ENCODE measurements at regions of chr19 and their contacts with region 1.

Region 1: DNA sequence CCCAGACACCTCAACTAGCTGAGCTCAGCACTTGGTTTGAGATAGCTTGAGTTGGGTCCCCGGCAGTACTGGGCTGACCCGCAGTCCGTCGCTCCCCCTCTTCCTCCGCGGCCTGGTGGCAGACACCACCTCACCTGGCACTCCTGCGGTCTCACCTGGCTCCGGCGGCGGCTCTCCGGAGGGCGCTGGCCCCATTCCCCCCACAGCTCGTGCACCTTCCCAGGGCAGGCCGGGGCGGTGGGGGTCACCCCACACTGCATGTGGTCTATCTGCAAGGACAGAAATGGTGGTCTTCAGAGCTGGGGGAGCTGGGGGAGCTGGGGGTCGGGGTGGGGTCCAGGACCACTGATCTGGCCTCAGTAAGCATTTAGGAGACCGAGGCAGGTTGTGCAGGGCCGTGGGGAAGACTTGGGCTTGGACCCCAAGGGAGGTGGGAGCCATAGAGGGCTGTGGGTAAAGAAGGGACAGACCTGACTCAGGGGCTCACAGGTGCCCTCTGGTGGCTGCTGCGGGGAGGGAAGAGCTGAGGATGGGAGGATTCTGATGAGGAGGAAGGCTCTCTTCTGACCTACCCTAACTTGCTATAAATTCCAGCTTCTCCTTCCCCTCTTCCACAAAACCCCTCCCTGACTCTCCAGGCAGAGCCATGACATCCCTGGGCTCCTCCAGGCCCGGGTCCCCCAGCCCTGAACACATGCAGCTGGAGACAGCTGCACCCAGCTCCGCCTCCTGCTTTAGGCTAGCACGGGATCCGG is 6.7 kb upstream of the PLIN4 start:
- DNase-seq: no peak
- ATAC-seq: peak; percentile 50
- H3K4me3 ChIP-seq: no peak overlapping the region
- H3K27ac ChIP-seq: no peak overlapping the region
- H3K4me1 ChIP-seq: peaks cover 39% of the 10 kb centered on the region
- H3K27me3 ChIP-seq: no peaks in the 10 kb centered on the region; a peak in 1 of 5 replicates
- CTCF ChIP-seq: peak; percentile 73
- EP300 ChIP-seq: no peak
- POLR2A ChIP-seq: no peak
- RAD21 ChIP-seq: no peak

Region 2: GRCh38 chr19:4504297-4505259 is 20.4 kb before region 1 on chr19:
- CTCF ChIA-PET with region 1: no interaction called
- POLR2A ChIA-PET with region 1: no interaction called
- in situ Hi-C with region 1: no loop called
- intact Hi-C with region 1: no loop called
- DNase-seq: no peak
- ATAC-seq: no peak
- H3K4me3 ChIP-seq: no peak overlapping the region
- H3K27ac ChIP-seq: no peak overlapping the region
- H3K4me1 ChIP-seq: no peaks in the 10 kb centered on the region
- H3K27me3 ChIP-seq: no peaks in the 10 kb centered on the region
- CTCF ChIP-seq: no peak
- EP300 ChIP-seq: no peak
- POLR2A ChIP-seq: no peak
- RAD21 ChIP-seq: no peak

Region 3: GRCh38 chr19:4534836-4535658 is 10.1 kb after region 1 on chr19 and contains the start of gene PLIN5:
- CTCF ChIA-PET with region 1: no interaction called
- POLR2A ChIA-PET with region 1: interaction called, 38 read pairs
- in situ Hi-C with region 1: no loop called
- intact Hi-C with region 1: no loop called
- DNase-seq: peak; percentile 80
- ATAC-seq: peak; percentile 61
- H3K4me3 ChIP-seq: peak within 1 kb of the TSS; percentile 37 to 71 (median 52); a peak in 5 of 6 replicates
- H3K27ac ChIP-seq: peak within 1 kb of the TSS; percentile 38
- H3K4me1 ChIP-seq: peaks cover 78% of the 10 kb centered on the region
- H3K27me3 ChIP-seq: no peaks in the 10 kb centered on the region; a peak in 1 of 5 replicates
- CTCF ChIP-seq: peak; percentile 32
- EP300 ChIP-seq: no peak
- POLR2A ChIP-seq: peak; percentile 63 to 81
- RAD21 ChIP-seq: peak; percentile 33; the same call in 1 of the 2 replicates
- total RNA-seq, gene PLIN5: 1.6 and 1.8 TPM in 2 replicates

Region 4: DNA sequence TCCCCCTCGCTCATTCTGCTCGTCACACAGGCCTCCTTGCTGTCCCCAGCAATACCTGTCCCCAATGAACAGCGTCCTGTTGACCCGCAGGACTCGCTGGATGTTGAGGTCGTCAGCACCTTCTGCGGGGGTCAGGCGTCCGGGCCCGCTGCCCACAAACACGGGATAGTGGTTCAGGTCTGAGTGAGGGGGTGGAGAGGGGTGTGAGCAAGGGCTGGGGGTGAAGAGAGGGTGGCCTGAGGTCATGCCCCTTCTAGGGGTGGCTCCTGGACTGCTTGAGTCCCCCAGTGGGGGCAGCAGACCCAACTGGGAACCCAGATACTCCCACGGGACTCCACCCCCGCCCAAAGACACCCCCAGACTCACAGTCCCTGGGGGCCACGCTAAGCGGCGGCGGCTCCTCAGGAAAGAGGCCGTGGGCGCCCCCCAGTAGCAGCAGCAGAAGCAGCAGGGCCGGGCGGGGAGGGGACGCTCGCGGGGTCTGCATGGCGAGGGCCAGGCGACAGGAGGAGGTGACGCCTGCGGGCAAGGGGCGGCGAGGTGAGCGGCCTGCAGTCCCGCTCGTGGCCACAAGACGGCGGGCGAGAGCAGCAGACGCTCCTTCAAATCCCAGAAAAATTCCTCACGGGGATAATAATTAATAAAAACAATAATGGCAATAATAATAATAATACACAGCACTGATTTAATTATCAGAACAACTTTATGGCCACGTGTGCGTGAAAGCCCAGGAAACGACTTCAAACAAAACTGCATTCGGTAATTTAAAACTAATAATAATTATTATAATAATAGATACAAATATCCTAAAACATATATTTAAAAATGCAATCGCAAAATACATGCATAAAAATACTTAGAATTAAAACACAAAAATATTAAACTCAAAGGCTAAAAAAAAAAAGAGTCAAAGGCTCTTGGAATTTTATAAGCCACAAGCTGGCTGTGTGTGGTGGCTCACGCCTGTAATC is 33.3 kb after region 1 on chr19:
- CTCF ChIA-PET with region 1: no interaction called
- POLR2A ChIA-PET with region 1: no interaction called
- in situ Hi-C with region 1: no loop called
- intact Hi-C with region 1: no loop called
- DNase-seq: no peak
- ATAC-seq: no peak
- H3K4me3 ChIP-seq: no peak overlapping the region
- H3K27ac ChIP-seq: no peak overlapping the region
- H3K4me1 ChIP-seq: no peaks in the 10 kb centered on the region
- H3K27me3 ChIP-seq: no peaks in the 10 kb centered on the region
- CTCF ChIP-seq: peak; percentile 69
- EP300 ChIP-seq: no peak
- POLR2A ChIP-seq: no peak
- RAD21 ChIP-seq: no peak; the same call in 1 of the 2 replicates

Region 5: GRCh38 chr19:4589579-4590410 is 64.8 kb after region 1 on chr19:
- CTCF ChIA-PET with region 1: no interaction called
- POLR2A ChIA-PET with region 1: no interaction called
- in situ Hi-C with region 1: no loop called
- intact Hi-C with region 1: no loop called
- DNase-seq: peak; percentile 65
- ATAC-seq: peak; percentile 87
- H3K4me3 ChIP-seq: peak overlapping the region in 1 of 3 experiments; percentile 26; a peak in 2 of 6 replicates
- H3K27ac ChIP-seq: no peak overlapping the region
- H3K4me1 ChIP-seq: peaks cover 68% of the 10 kb centered on the region
- H3K27me3 ChIP-seq: peaks cover 1 to 7% of the 10 kb centered on the region in 2 experiments; a peak in 2 of 5 replicates
- CTCF ChIP-seq: peak; percentile 90
- EP300 ChIP-seq: no peak
- POLR2A ChIP-seq: no peak
- RAD21 ChIP-seq: peak; percentile 73

Measured in HepG2 (cell line).